CD4-positive, alpha-beta T cell (primary cell): ENCODE measurements at regions of chr10 and their contacts with region 1.

Region 1: GRCh38 chr10:133357285-133358151 is at the start of gene FUOM:
- DNase-seq: peak; percentile 51 to 88 (median 66)
- ATAC-seq: peak; percentile 91
- H3K4me3 ChIP-seq: peak within 1 kb of the TSS; percentile 63
- H3K4me3 Mint-ChIP-seq: peak within 1 kb of the TSS; percentile 83
- H3K27ac ChIP-seq: peak within 1 kb of the TSS in 1 of 2 donors; percentile 29
- H3K27ac Mint-ChIP-seq: peak within 1 kb of the TSS; percentile 53
- H3K4me1 ChIP-seq: peaks cover 22% of the 10 kb centered on the region
- H3K4me1 Mint-ChIP-seq: no peaks in the 10 kb centered on the region
- H3K27me3 ChIP-seq: no peaks in the 10 kb centered on the region
- H3K27me3 Mint-ChIP-seq: no peaks in the 10 kb centered on the region
- CTCF ChIP-seq: no peak
- total RNA-seq, gene FUOM: 10.3 to 11.7 TPM

Region 2: GRCh38 chr10:133335246-133336117 is 22.0 kb before region 1 on chr10:
- CTCF ChIA-PET with region 1: no interaction called
- POLR2A ChIA-PET with region 1: interaction called, 8 read pairs
- intact Hi-C with region 1: loop called (anchors 1 to 2 kb)
- DNase-seq: peak; percentile 67 to 96 (median 83)
- ATAC-seq: peak; percentile 56
- H3K4me3 ChIP-seq: peak overlapping the region; percentile 58
- H3K4me3 Mint-ChIP-seq: peak overlapping the region; percentile 81
- H3K27ac ChIP-seq: peak overlapping the region; percentile 53 to 78
- H3K27ac Mint-ChIP-seq: peak overlapping the region; percentile 86
- H3K4me1 ChIP-seq: peaks cover 41% of the 10 kb centered on the region
- H3K4me1 Mint-ChIP-seq: peaks cover 6% of the 10 kb centered on the region
- H3K27me3 ChIP-seq: no peaks in the 10 kb centered on the region
- H3K27me3 Mint-ChIP-seq: peaks cover 12% of the 10 kb centered on the region
- CTCF ChIP-seq: no peak

Region 3: GRCh38 chr10:133373104-133373624 is 15.6 kb after region 1 on chr10 and contains the start of gene ECHS1:
- CTCF ChIA-PET with region 1: no interaction called
- POLR2A ChIA-PET with region 1: interaction called, 7 read pairs
- intact Hi-C with region 1: loop called in 1 of 2 experiments (anchors 1 kb)
- DNase-seq: peak; percentile 79 to 95 (median 92)
- ATAC-seq: peak; percentile 99
- H3K4me3 ChIP-seq: peak within 1 kb of the TSS; percentile 60
- H3K4me3 Mint-ChIP-seq: peak within 1 kb of the TSS; percentile 87
- H3K27ac ChIP-seq: no peak within 1 kb of the TSS
- H3K27ac Mint-ChIP-seq: peak within 1 kb of the TSS; percentile 55
- H3K4me1 ChIP-seq: peaks cover 25% of the 10 kb centered on the region
- H3K4me1 Mint-ChIP-seq: peaks cover 4% of the 10 kb centered on the region
- H3K27me3 ChIP-seq: no peaks in the 10 kb centered on the region
- H3K27me3 Mint-ChIP-seq: no peaks in the 10 kb centered on the region
- CTCF ChIP-seq: no peak
- total RNA-seq, gene ECHS1: 7.6 to 8.3 TPM